CD14-positive monocyte (primary cell): ENCODE measurements at regions of chr9 and their contacts with region 1.

Region 1: GRCh38 chr9:136482793-136483588 is at the start of gene SEC16A:
- DNase-seq: peak; percentile 96 to 99 (median 99)
- H3K4me3 ChIP-seq: peak within 1 kb of the TSS; percentile 75 to 93 (median 92)
- H3K4me3 Mint-ChIP-seq: peak within 1 kb of the TSS; percentile 92 to 96
- H3K27ac ChIP-seq: peak within 1 kb of the TSS; percentile 98
- H3K27ac Mint-ChIP-seq: peak within 1 kb of the TSS; percentile 97 to 99 (median 99)
- H3K4me1 ChIP-seq: peaks cover 26 to 39% of the 10 kb centered on the region in 2 donors
- H3K4me1 Mint-ChIP-seq: peaks cover 15% of the 10 kb centered on the region
- H3K27me3 ChIP-seq: peaks cover 0 to 2% of the 10 kb centered on the region in 2 donors
- H3K27me3 Mint-ChIP-seq: peaks cover 0 to 7% (median 6%) of the 10 kb centered on the region in 3 donors
- CTCF ChIP-seq: no peak
- polyA plus RNA-seq, gene SEC16A: 11.1 to 36.8 (median 19.1) TPM

Region 2: DNA sequence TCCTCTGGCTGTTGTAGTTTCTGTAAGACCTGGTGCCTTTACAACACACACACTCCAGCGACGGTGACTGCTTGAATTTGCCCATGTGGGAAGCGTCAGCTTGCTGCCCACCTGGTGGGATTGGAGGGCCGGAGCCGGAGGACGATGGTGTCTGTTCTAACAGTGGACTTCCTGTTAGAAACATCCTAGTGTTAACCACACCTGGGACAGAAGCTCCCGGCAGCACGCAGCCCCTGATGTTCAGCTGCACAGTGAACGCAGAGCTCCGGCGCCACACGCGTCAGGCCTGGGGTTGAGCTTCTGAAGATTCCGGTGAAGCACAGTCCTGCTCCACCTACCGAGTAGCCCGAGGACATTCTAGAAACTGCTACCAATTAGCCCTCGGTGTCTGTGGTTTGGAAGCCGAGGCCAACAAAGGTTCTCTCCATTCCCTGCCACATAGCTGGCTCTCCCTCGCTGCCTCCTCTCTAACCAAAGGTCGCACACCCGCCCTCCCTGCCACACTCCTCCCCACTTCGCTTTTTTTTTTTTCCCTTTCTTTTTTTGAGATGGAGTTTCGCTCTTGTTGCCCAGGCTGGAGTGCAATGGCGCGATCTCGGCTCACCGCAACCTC is 58.1 kb before region 1 on chr9:
- intact Hi-C with region 1: no loop called
- DNase-seq: no peak
- H3K4me3 ChIP-seq: no peak overlapping the region
- H3K4me3 Mint-ChIP-seq: no peak overlapping the region
- H3K27ac ChIP-seq: no peak overlapping the region
- H3K27ac Mint-ChIP-seq: peak overlapping the region in 1 of 7 donors; percentile 56
- H3K4me1 ChIP-seq: no peaks in the 10 kb centered on the region
- H3K4me1 Mint-ChIP-seq: no peaks in the 10 kb centered on the region
- H3K27me3 ChIP-seq: no peaks in the 10 kb centered on the region
- H3K27me3 Mint-ChIP-seq: no peaks in the 10 kb centered on the region
- CTCF ChIP-seq: no peak

Region 3: GRCh38 chr9:136545966-136546698 is 63.1 kb after region 1 on chr9 and contains the start of gene NOTCH1:
- intact Hi-C with region 1: loop called (anchors 5 kb)
- DNase-seq: peak; percentile 95 to 98 (median 97)
- H3K4me3 ChIP-seq: peak within 1 kb of the TSS; percentile 87 to 99 (median 93)
- H3K4me3 Mint-ChIP-seq: peak within 1 kb of the TSS; percentile 89 to 94
- H3K27ac ChIP-seq: peak within 1 kb of the TSS; percentile 84 to 92
- H3K27ac Mint-ChIP-seq: peak within 1 kb of the TSS; percentile 82 to 92 (median 90)
- H3K4me1 ChIP-seq: peaks cover 64 to 79% of the 10 kb centered on the region in 2 donors
- H3K4me1 Mint-ChIP-seq: peaks cover 51% of the 10 kb centered on the region
- H3K27me3 ChIP-seq: no peaks in the 10 kb centered on the region
- H3K27me3 Mint-ChIP-seq: peaks cover 2 to 11% (median 2%) of the 10 kb centered on the region in 3 donors
- CTCF ChIP-seq: no peak
- polyA plus RNA-seq, gene NOTCH1: 1.4 to 33.0 (median 2.2) TPM

Region 4: GRCh38 chr9:136631038-136632000 is 148.3 kb after region 1 on chr9:
- intact Hi-C with region 1: loop called (anchors 1 kb)
- DNase-seq: peak; percentile 82 to 85 (median 85)
- H3K4me3 ChIP-seq: no peak overlapping the region
- H3K4me3 Mint-ChIP-seq: no peak overlapping the region
- H3K27ac ChIP-seq: no peak overlapping the region
- H3K27ac Mint-ChIP-seq: no peak overlapping the region
- H3K4me1 ChIP-seq: peaks cover 4 to 23% of the 10 kb centered on the region in 2 donors
- H3K4me1 Mint-ChIP-seq: peaks cover 3% of the 10 kb centered on the region
- H3K27me3 ChIP-seq: peaks cover 0 to 25% of the 10 kb centered on the region in 2 donors
- H3K27me3 Mint-ChIP-seq: peaks cover 27 to 36% (median 32%) of the 10 kb centered on the region in 3 donors
- CTCF ChIP-seq: peak; percentile 79

Region 5: GRCh38 chr9:136728080-136728547 is 245.1 kb after region 1 on chr9:
- intact Hi-C with region 1: loop called in 1 of 2 experiments (anchors 10 kb)
- DNase-seq: peak; percentile 86 to 93 (median 93)
- H3K4me3 ChIP-seq: peak overlapping the region; percentile 80 to 89 (median 85)
- H3K4me3 Mint-ChIP-seq: peak overlapping the region; percentile 96 to 97
- H3K27ac ChIP-seq: peak overlapping the region in 1 of 2 donors; percentile 87
- H3K27ac Mint-ChIP-seq: peak overlapping the region in 1 of 7 donors; percentile 85
- H3K4me1 ChIP-seq: peaks cover 26 to 38% of the 10 kb centered on the region in 2 donors
- H3K4me1 Mint-ChIP-seq: peaks cover 33% of the 10 kb centered on the region
- H3K27me3 ChIP-seq: peaks cover 0 to 9% of the 10 kb centered on the region in 2 donors
- H3K27me3 Mint-ChIP-seq: peaks cover 6 to 12% (median 10%) of the 10 kb centered on the region in 3 donors
- CTCF ChIP-seq: peak; percentile 91